HCT116 (cell line): ENCODE measurements at regions of chr17 and their contacts with region 1.

Region 1: DNA sequence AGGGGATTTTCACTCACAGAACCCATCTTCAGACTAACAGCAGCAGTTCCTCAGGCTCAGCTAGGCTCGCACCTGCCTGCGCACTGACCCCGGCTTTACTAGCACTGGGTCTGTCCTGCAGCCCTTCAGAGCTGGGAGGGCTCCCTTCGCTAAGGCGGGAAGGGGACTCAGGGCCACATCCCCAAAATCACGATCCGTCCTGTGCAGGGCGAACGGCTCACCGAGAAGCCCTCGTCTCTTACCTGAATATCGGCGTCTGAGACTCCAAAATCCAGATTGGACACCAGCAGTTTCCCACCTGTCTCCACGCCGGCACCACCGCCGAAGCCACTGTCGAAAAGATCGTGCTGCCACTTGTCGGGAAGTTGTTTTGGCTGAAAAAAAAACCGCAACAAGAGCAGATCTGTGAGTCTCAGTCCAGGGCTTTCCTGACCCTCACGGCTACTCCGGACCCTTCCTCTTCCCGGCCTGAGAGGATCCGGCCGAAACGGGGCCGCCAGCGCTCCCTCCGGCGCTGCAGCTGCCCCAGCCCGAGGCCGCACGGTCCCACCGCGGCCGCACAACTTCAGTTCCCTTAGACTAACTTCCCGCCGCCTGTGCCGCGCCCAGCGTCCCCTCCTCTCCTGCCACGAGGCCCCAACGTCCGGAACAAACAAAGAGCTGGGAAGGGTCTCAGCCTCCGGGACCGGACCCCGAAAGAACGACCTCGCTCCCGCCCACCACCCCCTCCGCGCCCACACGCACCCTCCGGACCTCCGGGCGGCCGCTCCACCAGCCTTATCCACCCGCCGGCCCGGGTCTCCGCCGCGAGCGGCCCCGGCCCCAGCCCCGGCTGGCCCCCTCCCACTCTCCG is 713 bp downstream of the ALYREF start:
- DNase-seq: no peak
- ATAC-seq: no peak
- H3K4me3 ChIP-seq: peak overlapping the region; percentile 95 to 98
- H3K27ac ChIP-seq: peak overlapping the region; percentile 97
- H3K4me1 ChIP-seq: peaks cover 15 to 34% of the 10 kb centered on the region in 2 experiments
- H3K27me3 ChIP-seq: no peaks in the 10 kb centered on the region
- CTCF ChIP-seq: no peak
- POLR2A ChIP-seq: no peak
- RAD21 ChIP-seq: no peak

Region 2: DNA sequence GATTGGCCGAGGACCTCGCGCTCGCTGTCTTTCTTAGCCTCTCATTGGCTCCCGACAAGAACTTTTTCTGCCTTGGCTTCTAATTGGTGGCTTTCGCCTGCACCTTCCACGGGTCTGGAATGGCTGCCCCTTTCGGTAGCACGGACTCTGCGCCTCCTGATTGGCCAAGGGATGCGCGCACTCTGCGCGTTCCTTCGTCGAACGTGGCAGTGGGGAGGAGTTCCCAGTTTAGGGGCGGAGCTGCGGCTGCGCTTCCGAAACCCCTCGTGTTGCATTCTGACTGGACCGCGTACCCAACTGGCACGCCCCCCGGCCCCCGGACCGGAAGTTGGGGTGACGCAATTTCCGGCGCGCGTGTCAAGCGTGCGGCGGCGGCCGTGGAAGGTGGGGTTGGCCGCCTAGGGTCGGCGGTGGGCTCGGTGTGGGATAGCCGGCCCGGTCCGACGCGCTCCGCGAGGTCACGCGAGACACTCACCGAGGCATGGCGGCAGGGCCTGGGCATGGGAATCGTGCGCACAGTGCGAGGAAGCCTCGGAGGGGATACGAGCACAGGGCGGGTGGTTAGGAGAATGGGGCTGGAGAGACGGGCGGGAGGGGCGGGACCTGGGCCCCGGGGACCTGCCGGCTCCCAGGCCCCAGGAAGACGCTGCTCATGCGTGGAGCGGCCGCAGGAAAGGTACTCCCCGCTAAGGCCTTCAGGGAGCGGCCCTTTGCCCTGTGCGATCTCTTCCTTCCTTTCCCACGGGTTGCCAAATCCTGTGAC is 29.7 kb before region 1 on chr17:
- CTCF ChIA-PET with region 1: no interaction called
- POLR2A ChIA-PET with region 1: no interaction called
- RAD21 ChIA-PET with region 1: no interaction called
- intact Hi-C with region 1: no loop called
- DNase-seq: peak; percentile 100
- ATAC-seq: peak; percentile 89
- H3K4me3 ChIP-seq: peak overlapping the region; percentile 95 to 97
- H3K27ac ChIP-seq: peak overlapping the region; percentile 94
- H3K4me1 ChIP-seq: peaks cover 20 to 59% of the 10 kb centered on the region in 2 experiments
- H3K27me3 ChIP-seq: no peaks in the 10 kb centered on the region
- CTCF ChIP-seq: no peak
- POLR2A ChIP-seq: peak; percentile 87
- RAD21 ChIP-seq: no peak

Region 3: GRCh38 chr17:81911277-81911961 is 20.7 kb after region 1 on chr17 and contains the start of gene PCYT2:
- CTCF ChIA-PET with region 1: no interaction called
- POLR2A ChIA-PET with region 1: no interaction called
- RAD21 ChIA-PET with region 1: no interaction called
- intact Hi-C with region 1: loop called (anchors 1 kb)
- DNase-seq: peak; percentile 90
- ATAC-seq: peak; percentile 88
- H3K4me3 ChIP-seq: peak within 1 kb of the TSS; percentile 85 to 94
- H3K27ac ChIP-seq: peak within 1 kb of the TSS; percentile 72
- H3K4me1 ChIP-seq: peaks cover 34 to 47% of the 10 kb centered on the region in 2 experiments
- H3K27me3 ChIP-seq: no peaks in the 10 kb centered on the region
- CTCF ChIP-seq: peak in 2 of 3 experiments; percentile 39 to 51; a peak in 4 of 6 replicates
- POLR2A ChIP-seq: no peak
- RAD21 ChIP-seq: no peak
- total RNA-seq, gene PCYT2: 51.5 TPM